ENCODE measurements at regions of chr2 and their contacts with region 1.

Region 1: DNA sequence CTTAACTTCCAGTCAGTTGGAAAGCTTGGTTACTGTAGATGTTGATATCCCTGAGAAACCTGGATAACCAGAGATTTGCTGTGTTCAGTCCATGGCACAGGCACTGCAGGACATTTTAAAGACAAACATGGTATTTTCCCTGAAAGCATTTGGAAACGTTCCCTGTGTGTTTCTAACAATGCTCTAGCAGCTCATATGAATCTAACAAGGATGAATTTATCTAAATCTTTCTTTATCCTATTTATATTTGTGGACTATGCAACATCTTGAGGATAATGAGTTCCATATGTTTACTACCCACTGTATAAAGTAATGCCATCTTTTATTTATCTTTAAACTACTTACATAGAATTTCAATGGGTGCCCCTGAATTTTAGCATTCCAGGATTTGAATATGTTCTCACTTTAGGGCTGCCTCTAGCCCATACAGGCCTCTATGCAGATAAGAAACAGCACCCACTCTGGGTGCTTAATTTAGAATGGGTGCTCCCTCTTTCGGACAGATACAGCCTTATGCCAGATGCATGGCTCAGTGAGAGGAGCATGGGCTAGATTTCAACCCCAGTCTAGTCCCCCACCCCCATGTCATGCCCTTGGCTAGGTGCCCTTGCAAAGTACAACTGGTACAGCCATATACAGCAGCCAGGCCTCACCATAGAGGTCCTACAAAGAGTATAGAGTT is 50.6 kb upstream of the NEMP2 start:
- DNase-seq: no peak
- H3K4me3 ChIP-seq: no peak overlapping the region
- H3K27ac ChIP-seq: no peak overlapping the region
- H3K4me1 ChIP-seq: no peaks in the 10 kb centered on the region
- H3K27me3 ChIP-seq: no peaks in the 10 kb centered on the region
- CTCF ChIP-seq: no peak
- POLR2A ChIP-seq: no peak

Region 2: DNA sequence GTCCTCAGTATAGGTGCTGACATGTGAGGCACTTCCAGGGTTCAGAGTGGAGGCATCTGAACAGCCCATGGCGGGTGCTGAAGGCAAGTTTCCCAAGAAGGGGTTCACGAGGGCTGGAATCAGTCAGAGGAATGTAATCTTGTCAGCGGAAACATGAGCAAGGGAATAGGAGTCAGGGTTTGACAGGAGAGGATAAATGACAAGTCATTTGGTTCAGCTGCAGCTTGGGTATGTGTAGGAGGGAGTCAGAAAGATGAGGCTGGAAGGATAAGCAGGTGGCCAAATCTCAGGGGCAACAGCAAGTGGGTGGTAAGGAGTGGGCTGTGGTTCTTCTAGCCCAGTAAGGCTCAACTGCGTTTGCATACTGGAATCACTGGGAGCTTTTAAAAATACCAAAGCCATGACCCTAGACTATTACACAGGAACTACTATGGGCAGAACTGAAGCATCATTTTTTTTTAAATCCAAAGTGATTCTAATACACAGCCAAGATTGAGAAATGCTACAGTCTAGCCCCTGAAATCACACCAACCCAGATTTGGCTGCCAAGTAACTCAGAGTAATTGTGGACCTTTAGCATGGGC is 22.0 kb after region 1 on chr2:
- intact Hi-C with region 1: loop called (anchors 1 kb)
- DNase-seq: no peak
- H3K4me3 ChIP-seq: no peak overlapping the region
- H3K27ac ChIP-seq: no peak overlapping the region
- H3K4me1 ChIP-seq: no peaks in the 10 kb centered on the region
- H3K27me3 ChIP-seq: no peaks in the 10 kb centered on the region
- CTCF ChIP-seq: no peak
- POLR2A ChIP-seq: no peak

Measured in breast epithelium (tissue), 4 donors.